H1 (cell line): ENCODE measurements at regions of chr11 and their contacts with region 1.

Region 1: GRCh38 chr11:62705880-62706849 is 1.1 kb downstream of the BSCL2 start:
- DNase-seq: peak; percentile 82 to 95
- H3K4me3 ChIP-seq: peak overlapping the region; percentile 64 to 83 (median 82)
- H3K27ac ChIP-seq: peak overlapping the region; percentile 65
- H3K4me1 ChIP-seq: peaks cover 7 to 34% (median 20%) of the 10 kb centered on the region in 4 experiments
- H3K27me3 ChIP-seq: no peaks in the 10 kb centered on the region
- CTCF ChIP-seq: no peak
- EP300 ChIP-seq: no peak
- POLR2A ChIP-seq: peak in 1 of 2 experiments; percentile 62; a peak in 2 of 3 replicates
- RAD21 ChIP-seq: no peak

Region 2: DNA sequence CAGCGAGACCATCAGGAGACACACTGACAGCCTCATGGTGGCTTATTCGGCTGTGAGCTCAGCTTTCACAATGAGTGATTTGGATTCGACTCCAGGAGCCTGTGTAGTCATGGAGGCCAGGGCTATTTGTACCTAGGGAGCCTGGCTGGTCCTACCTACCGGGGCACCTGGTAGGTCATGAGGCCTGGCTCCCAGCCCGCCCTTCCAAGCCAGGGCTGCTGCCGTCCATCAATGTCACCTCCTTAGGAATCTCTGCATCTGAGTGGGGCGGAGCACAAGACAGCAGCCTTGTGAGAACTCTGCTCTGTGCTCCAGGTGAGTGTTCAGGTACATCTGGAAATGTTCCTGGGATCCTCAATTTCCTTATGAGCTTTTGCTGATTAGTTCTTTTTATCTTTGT is 407.2 kb before region 1 on chr11 and contains the start of gene SCGB1D4:
- CTCF ChIA-PET with region 1: no interaction called
- POLR2A ChIA-PET with region 1: no interaction called
- DNase-seq: no peak
- H3K4me3 ChIP-seq: no peak within 1 kb of the TSS
- H3K27ac ChIP-seq: no peak within 1 kb of the TSS
- H3K4me1 ChIP-seq: no peaks in the 10 kb centered on the region
- H3K27me3 ChIP-seq: no peaks in the 10 kb centered on the region; a peak in 1 of 7 replicates
- CTCF ChIP-seq: no peak
- EP300 ChIP-seq: no peak
- POLR2A ChIP-seq: no peak
- RAD21 ChIP-seq: no peak
- total RNA-seq, gene SCGB1D4: not detected in 2 replicates

Region 3: DNA sequence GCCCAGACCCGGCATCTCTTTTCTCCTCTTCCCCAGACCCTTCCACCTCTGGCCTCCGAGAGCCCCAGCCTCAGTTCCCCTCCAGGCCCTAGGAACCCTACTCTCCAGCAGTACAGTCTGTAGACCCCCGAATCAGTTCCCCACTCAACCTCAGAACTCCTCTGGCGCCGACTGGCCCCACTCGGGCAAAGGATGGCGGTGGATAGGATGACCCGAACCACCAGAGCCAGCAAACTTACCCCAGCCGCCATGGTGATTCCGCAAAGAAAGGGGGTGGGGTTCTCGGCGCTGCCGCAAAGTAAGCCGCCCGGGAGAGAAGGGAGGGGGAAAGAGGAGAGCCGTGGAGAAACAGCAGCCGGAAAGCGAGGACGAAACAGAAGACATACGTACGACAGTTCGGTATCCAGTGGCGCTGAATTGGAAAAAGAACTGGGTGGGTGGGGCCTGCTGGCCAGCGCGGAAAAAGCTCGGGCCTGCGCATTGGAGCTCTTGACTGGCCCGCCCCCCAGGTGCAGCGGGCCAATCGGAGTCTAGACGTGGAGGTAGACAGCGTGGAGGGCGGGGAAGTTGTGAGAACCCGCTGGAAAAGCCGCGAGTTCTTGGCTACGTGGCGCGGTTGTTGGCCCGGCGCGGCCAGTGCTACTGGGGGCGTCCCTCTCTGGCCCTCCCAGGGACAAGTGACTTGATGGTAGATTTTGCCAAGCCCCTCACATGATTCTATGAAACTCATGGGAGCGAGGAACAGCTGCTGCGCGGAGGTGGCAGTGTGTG is 132.4 kb before region 1 on chr11 and contains the start of gene EEF1G:
- CTCF ChIA-PET with region 1: no interaction called
- POLR2A ChIA-PET with region 1: interaction called, 22 read pairs
- DNase-seq: peak; percentile 96 to 99
- H3K4me3 ChIP-seq: peak within 1 kb of the TSS; percentile 90 to 100 (median 91)
- H3K27ac ChIP-seq: peak within 1 kb of the TSS; percentile 75
- H3K4me1 ChIP-seq: peaks cover 0 to 11% (median 7%) of the 10 kb centered on the region in 4 experiments; a peak in 4 of 7 replicates
- H3K27me3 ChIP-seq: no peaks in the 10 kb centered on the region
- CTCF ChIP-seq: no peak
- EP300 ChIP-seq: peak in 1 of 2 experiments; percentile 48; a peak in 1 of 3 replicates
- POLR2A ChIP-seq: peak; percentile 64 to 86
- RAD21 ChIP-seq: no peak
- total RNA-seq, gene EEF1G: 1,622 and 1,627 TPM in 2 replicates

Region 4: GRCh38 chr11:62689421-62690183 is 16.6 kb before region 1 on chr11 and contains the start of gene LRRN4CL:
- CTCF ChIA-PET with region 1: interaction called, 35 read pairs
- POLR2A ChIA-PET with region 1: interaction called, 2,041 read pairs
- DNase-seq: no peak
- H3K4me3 ChIP-seq: no peak within 1 kb of the TSS
- H3K27ac ChIP-seq: no peak within 1 kb of the TSS
- H3K4me1 ChIP-seq: peaks cover 0 to 4% (median 0%) of the 10 kb centered on the region in 4 experiments; a peak in 2 of 7 replicates
- H3K27me3 ChIP-seq: no peaks in the 10 kb centered on the region
- CTCF ChIP-seq: no peak
- EP300 ChIP-seq: no peak
- POLR2A ChIP-seq: no peak
- RAD21 ChIP-seq: no peak
- total RNA-seq, gene LRRN4CL: 0.26 TPM in 1 of 2 replicates, not detected in the other

Region 5: GRCh38 chr11:62726915-62727763 is 21.0 kb after region 1 on chr11 and contains the start of gene HNRNPUL2:
- CTCF ChIA-PET with region 1: interaction called, 3 read pairs
- POLR2A ChIA-PET with region 1: interaction called, 120 read pairs
- DNase-seq: peak; percentile 94 to 97
- H3K4me3 ChIP-seq: peak within 1 kb of the TSS; percentile 87 to 98 (median 96)
- H3K27ac ChIP-seq: peak within 1 kb of the TSS; percentile 92
- H3K4me1 ChIP-seq: no peaks in the 10 kb centered on the region; a peak in 3 of 7 replicates
- H3K27me3 ChIP-seq: no peaks in the 10 kb centered on the region
- CTCF ChIP-seq: no peak
- EP300 ChIP-seq: 0 out of 3 replicates have a peak, but pooled peaks of 1 of the 2 experiments have one; percentile 25
- POLR2A ChIP-seq: peak; percentile 90
- RAD21 ChIP-seq: no peak
- total RNA-seq, gene HNRNPUL2: 44.3 and 46.4 TPM in 2 replicates

Region 6: DNA sequence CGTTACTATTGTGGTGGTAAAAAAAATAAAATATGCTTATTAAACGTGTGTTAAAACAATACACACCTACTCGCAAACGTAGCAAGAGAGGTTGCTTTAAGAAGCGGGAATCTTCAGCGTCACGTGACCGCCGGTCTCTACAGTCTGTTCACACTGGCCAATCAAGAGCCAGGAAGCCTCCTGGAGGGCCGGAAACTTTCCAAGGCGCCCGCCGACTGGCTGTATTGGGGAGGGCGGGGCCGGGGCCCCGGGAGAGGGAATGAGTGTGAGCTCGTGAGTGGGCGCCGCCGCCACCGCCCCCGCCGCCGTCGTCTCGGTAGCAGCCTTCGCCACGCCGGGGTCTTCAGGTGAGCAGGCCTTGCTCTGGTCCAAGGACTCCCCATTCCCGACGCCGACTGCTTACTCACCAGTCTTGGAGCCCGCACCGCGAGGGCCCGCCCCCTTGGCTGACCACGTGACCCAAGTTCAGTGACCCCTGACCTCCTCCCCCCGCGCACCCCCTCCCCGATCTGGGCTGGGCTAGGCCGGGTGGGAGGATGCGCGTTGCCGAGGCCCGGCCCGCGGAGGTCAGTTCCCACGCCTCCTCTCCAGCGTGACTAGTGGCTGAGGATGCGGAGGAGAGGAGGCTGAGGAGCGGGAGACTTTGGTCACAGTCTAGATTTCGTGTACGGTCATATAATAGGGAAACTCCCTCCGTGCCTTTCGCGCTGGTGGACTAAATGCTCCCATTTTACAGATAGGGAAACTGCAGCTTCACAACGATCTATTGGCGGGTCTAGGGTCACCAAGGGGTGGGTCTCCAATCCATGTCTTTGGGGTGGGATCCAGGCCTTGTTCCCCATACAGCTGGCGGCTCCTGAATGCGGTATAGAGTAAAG is 65.2 kb after region 1 on chr11 and contains the start of gene TAF6L:
- CTCF ChIA-PET with region 1: interaction called, 9 read pairs
- POLR2A ChIA-PET with region 1: interaction called, 19 read pairs
- DNase-seq: peak; percentile 75 to 98
- H3K4me3 ChIP-seq: peak within 1 kb of the TSS; percentile 77 to 95 (median 92)
- H3K27ac ChIP-seq: peak within 1 kb of the TSS; percentile 72
- H3K4me1 ChIP-seq: peaks cover 0 to 9% (median 5%) of the 10 kb centered on the region in 4 experiments; a peak in 6 of 7 replicates
- H3K27me3 ChIP-seq: no peaks in the 10 kb centered on the region
- CTCF ChIP-seq: no peak
- EP300 ChIP-seq: no peak
- POLR2A ChIP-seq: peak; percentile 78 to 95
- RAD21 ChIP-seq: no peak
- total RNA-seq, gene TAF6L: 29.6 and 31.9 TPM in 2 replicates